CD14-positive monocyte (primary cell): ENCODE measurements at regions of chr5 and their contacts with region 1.

Region 1: GRCh38 chr5:43040287-43041098 is at the start of gene ANXA2R:
- DNase-seq: peak; percentile 90 to 96 (median 92)
- H3K4me3 ChIP-seq: peak within 1 kb of the TSS; percentile 67 to 81 (median 70)
- H3K4me3 Mint-ChIP-seq: peak within 1 kb of the TSS; percentile 90 to 95
- H3K27ac ChIP-seq: peak within 1 kb of the TSS; percentile 100
- H3K27ac Mint-ChIP-seq: peak within 1 kb of the TSS; percentile 97 to 100 (median 98)
- H3K4me1 ChIP-seq: peaks cover 36 to 43% of the 10 kb centered on the region in 2 donors
- H3K4me1 Mint-ChIP-seq: peaks cover 47% of the 10 kb centered on the region
- H3K27me3 ChIP-seq: no peaks in the 10 kb centered on the region
- H3K27me3 Mint-ChIP-seq: no peaks in the 10 kb centered on the region
- CTCF ChIP-seq: peak; percentile 87
- polyA plus RNA-seq, gene ANXA2R: 2.3 to 6.4 (median 3.1) TPM

Region 2: GRCh38 chr5:41924872-41925554 is 1115.5 kb before region 1 on chr5 and contains the start of gene FBXO4:
- intact Hi-C with region 1: loop called in 1 of 2 experiments (anchors 5 kb)
- DNase-seq: peak; percentile 82 to 89 (median 87)
- H3K4me3 ChIP-seq: peak within 1 kb of the TSS; percentile 71 to 90 (median 81)
- H3K4me3 Mint-ChIP-seq: peak within 1 kb of the TSS; percentile 89 to 92
- H3K27ac ChIP-seq: peak within 1 kb of the TSS; percentile 86 to 89
- H3K27ac Mint-ChIP-seq: peak within 1 kb of the TSS; percentile 86 to 99 (median 95)
- H3K4me1 ChIP-seq: peaks cover 15 to 23% of the 10 kb centered on the region in 2 donors
- H3K4me1 Mint-ChIP-seq: peaks cover 17% of the 10 kb centered on the region
- H3K27me3 ChIP-seq: no peaks in the 10 kb centered on the region
- H3K27me3 Mint-ChIP-seq: no peaks in the 10 kb centered on the region
- CTCF ChIP-seq: peak; percentile 67
- polyA plus RNA-seq, gene FBXO4: 3.7 to 10.4 (median 8.7) TPM

Region 3: GRCh38 chr5:42566652-42567295 is 473.7 kb before region 1 on chr5:
- intact Hi-C with region 1: no loop called
- DNase-seq: no peak
- H3K4me3 ChIP-seq: no peak overlapping the region
- H3K4me3 Mint-ChIP-seq: no peak overlapping the region
- H3K27ac ChIP-seq: no peak overlapping the region
- H3K27ac Mint-ChIP-seq: no peak overlapping the region
- H3K4me1 ChIP-seq: no peaks in the 10 kb centered on the region
- H3K4me1 Mint-ChIP-seq: no peaks in the 10 kb centered on the region
- H3K27me3 ChIP-seq: no peaks in the 10 kb centered on the region
- H3K27me3 Mint-ChIP-seq: peaks cover 0 to 7% (median 0%) of the 10 kb centered on the region in 3 donors
- CTCF ChIP-seq: no peak

Region 4: GRCh38 chr5:43008369-43009153 is 31.9 kb before region 1 on chr5:
- intact Hi-C with region 1: loop called (anchors 1 to 5 kb)
- DNase-seq: peak; percentile 84 to 90 (median 89)
- H3K4me3 ChIP-seq: peak overlapping the region; percentile 58 to 96 (median 86)
- H3K4me3 Mint-ChIP-seq: peak overlapping the region; percentile 88 to 96
- H3K27ac ChIP-seq: peak overlapping the region; percentile 97
- H3K27ac Mint-ChIP-seq: peak overlapping the region; percentile 97 to 100 (median 99)
- H3K4me1 ChIP-seq: peaks cover 38 to 57% of the 10 kb centered on the region in 2 donors
- H3K4me1 Mint-ChIP-seq: peaks cover 40% of the 10 kb centered on the region
- H3K27me3 ChIP-seq: no peaks in the 10 kb centered on the region
- H3K27me3 Mint-ChIP-seq: peaks cover 0 to 2% (median 0%) of the 10 kb centered on the region in 3 donors
- CTCF ChIP-seq: no peak

Region 5: GRCh38 chr5:43019614-43020293 is 20.7 kb before region 1 on chr5:
- intact Hi-C with region 1: loop called in 1 of 2 experiments (anchors 1 kb)
- DNase-seq: peak; percentile 84 to 90 (median 85)
- H3K4me3 ChIP-seq: peak overlapping the region; percentile 75 to 99 (median 80)
- H3K4me3 Mint-ChIP-seq: peak overlapping the region; percentile 95 to 97
- H3K27ac ChIP-seq: peak overlapping the region; percentile 97 to 99
- H3K27ac Mint-ChIP-seq: peak overlapping the region; percentile 96 to 100 (median 99)
- H3K4me1 ChIP-seq: peaks cover 16 to 18% of the 10 kb centered on the region in 2 donors
- H3K4me1 Mint-ChIP-seq: peaks cover 29% of the 10 kb centered on the region
- H3K27me3 ChIP-seq: no peaks in the 10 kb centered on the region
- H3K27me3 Mint-ChIP-seq: peaks cover 0 to 2% (median 0%) of the 10 kb centered on the region in 3 donors
- CTCF ChIP-seq: peak; percentile 62